Colonic mucosa (tissue), 4 donors: ENCODE measurements at regions of chr16 and their contacts with region 1.

Region 1: GRCh38 chr16:21184834-21185233 is 26.4 kb downstream of the LDAF1 start:
- DNase-seq: no peak
- H3K4me3 ChIP-seq: no peak overlapping the region
- H3K27ac ChIP-seq: no peak overlapping the region
- H3K4me1 ChIP-seq: peaks cover 3% of the 10 kb centered on the region
- H3K27me3 ChIP-seq: no peaks in the 10 kb centered on the region
- CTCF ChIP-seq: no peak

Region 2: DNA sequence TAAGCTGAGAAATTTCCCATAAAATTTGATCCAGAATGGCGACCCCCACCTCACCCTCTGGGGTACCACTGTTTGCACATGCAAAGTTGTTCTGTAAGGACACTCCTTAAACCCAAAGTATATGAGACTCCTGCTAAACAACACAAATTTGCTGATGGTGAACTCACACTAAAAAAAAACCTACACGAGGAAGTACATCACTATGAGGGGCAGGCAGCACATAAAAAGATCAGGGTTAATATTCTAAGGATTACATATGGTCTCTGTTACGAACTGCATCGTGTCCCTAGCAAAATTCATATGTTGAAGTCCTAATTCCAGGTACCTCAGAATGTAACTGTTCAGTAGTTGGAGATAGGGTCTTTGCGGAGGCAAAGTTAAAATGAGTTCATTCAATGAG is 223.9 kb before region 1 on chr16:
- intact Hi-C with region 1: no loop called
- DNase-seq: no peak
- H3K4me3 ChIP-seq: no peak overlapping the region
- H3K27ac ChIP-seq: no peak overlapping the region
- H3K4me1 ChIP-seq: no peaks in the 10 kb centered on the region
- H3K27me3 ChIP-seq: no peaks in the 10 kb centered on the region
- CTCF ChIP-seq: no peak

Region 3: GRCh38 chr16:21277927-21278706 is 93.3 kb after region 1 on chr16 and contains the start of gene CRYM:
- intact Hi-C with region 1: loop called (anchors 5 kb)
- DNase-seq: peak; percentile 83
- H3K4me3 ChIP-seq: peak within 1 kb of the TSS; percentile 42
- H3K27ac ChIP-seq: peak within 1 kb of the TSS; percentile 6
- H3K4me1 ChIP-seq: no peaks in the 10 kb centered on the region
- H3K27me3 ChIP-seq: no peaks in the 10 kb centered on the region
- CTCF ChIP-seq: peak; percentile 79
- total RNA-seq, gene CRYM: 10.4 to 14.0 TPM

Region 4: DNA sequence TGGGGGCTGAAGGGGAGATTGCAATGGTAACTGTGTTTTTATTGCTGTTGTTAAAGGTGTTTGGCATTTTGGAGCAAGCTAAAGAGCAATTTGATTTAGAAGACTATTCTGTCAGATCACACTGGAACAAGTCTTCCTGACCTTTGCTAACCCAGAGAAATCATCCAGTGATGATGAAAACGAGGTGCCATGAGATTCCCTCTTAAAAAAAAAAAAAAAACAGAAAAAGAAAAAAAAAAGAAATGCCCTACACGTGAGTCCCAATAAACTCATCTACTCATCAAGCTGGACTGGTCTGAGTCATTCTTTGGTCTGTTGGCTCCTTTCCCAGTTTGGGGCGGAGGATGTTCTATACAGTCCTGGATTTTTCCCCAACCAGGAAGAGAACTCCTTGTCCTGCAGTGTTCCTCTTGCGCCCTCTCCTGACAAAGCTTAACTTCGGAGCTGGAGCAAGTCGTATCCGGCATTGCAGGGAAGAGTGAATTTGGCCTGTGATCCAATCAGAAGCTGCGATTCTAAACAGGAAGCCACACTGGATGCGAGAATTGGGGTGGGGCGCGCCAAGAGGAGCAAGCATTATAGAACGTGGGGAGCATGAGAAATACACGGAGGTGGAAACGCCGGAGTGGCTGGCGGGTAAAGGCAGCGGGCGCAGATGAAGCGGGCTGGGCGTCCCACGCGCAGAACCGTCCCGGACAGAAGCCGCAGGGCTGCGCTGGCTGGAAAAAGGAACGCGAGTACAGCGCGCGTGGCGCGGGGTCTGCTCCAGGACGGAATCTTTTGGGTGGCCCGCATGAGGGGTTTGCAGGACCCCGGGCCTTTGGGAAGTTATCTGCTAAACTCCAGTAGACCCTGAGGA is 115.7 kb after region 1 on chr16:
- intact Hi-C with region 1: loop called (anchors 2 kb)
- DNase-seq: peak; percentile 100
- H3K4me3 ChIP-seq: peak overlapping the region; percentile 74
- H3K27ac ChIP-seq: peak overlapping the region; percentile 96
- H3K4me1 ChIP-seq: peaks cover 5% of the 10 kb centered on the region
- H3K27me3 ChIP-seq: no peaks in the 10 kb centered on the region
- CTCF ChIP-seq: peak; percentile 62